ENCODE measurements at regions of chr9 and their contacts with region 1.

Region 1: GRCh38 chr9:113275157-113276131 is at the starts of genes CDC26 and PRPF4:
- DNase-seq: peak; percentile 98
- ATAC-seq: peak; percentile 95
- H3K4me3 Mint-ChIP-seq: no peak within 1 kb of the TSS
- H3K27ac Mint-ChIP-seq: no peak within 1 kb of the TSS
- H3K4me1 Mint-ChIP-seq: peaks cover 21% of the 10 kb centered on the region
- H3K27me3 Mint-ChIP-seq: no peaks in the 10 kb centered on the region
- total RNA-seq, gene CDC26: 26.1 to 28.9 TPM
- total RNA-seq, gene PRPF4: 33.3 to 37.3 TPM

Region 2: DNA sequence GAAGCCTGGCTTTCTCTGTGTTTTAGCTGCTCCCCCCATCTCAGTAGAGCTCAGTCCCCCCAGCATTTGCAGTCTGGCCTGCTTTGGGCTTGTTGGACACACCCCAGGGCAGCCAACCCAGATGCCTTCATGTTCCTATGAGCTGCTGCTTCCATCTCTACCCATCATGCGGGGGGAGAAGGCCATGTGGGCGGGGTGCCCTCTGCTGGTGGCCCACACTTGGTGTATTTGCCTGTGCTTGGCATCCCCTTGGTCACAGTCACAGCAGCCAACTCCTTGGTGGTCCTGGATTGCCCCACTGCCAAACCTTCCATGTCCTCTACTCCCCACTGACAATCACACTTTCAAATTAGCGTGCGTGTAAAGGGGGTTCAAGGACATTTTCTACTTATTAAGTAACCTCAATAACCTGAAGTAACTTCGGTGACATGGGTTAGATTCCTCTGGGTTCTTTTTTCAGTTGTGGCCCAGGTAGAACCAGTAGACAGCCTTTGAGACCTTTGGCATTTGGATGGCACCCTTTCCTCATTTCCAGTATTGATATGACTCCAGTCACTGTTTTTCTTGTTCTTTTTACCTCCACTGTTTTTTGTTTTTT is 482.1 kb before region 1 on chr9:
- CTCF ChIA-PET with region 1: no interaction called
- POLR2A ChIA-PET with region 1: no interaction called
- DNase-seq: peak; percentile 89
- ATAC-seq: peak; percentile 99
- H3K4me3 Mint-ChIP-seq: no peak overlapping the region
- H3K27ac Mint-ChIP-seq: no peak overlapping the region
- H3K4me1 Mint-ChIP-seq: peaks cover 6% of the 10 kb centered on the region
- H3K27me3 Mint-ChIP-seq: no peaks in the 10 kb centered on the region

Region 3: DNA sequence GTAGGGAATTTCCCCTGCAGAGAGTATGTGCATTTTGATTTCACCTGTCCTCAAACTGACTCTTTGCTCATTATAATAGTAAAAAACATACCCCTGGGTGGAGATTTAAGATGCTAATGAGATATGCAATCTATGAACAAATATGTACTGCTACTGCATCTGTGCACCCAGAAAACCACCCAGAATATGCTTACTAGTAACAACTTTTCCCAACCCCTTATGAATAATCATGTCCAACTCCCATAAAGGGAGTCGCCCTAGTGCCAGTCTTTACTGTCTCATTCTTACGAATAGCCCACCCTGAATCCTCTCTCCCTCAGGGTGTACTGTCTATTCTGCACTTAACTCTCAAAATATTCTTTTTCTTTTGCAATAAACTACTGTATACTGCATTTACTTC is 179.9 kb before region 1 on chr9:
- CTCF ChIA-PET with region 1: no interaction called
- POLR2A ChIA-PET with region 1: no interaction called
- DNase-seq: no peak
- ATAC-seq: no peak
- H3K4me3 Mint-ChIP-seq: no peak overlapping the region
- H3K27ac Mint-ChIP-seq: no peak overlapping the region
- H3K4me1 Mint-ChIP-seq: no peaks in the 10 kb centered on the region
- H3K27me3 Mint-ChIP-seq: peaks cover 21% of the 10 kb centered on the region

Region 4: DNA sequence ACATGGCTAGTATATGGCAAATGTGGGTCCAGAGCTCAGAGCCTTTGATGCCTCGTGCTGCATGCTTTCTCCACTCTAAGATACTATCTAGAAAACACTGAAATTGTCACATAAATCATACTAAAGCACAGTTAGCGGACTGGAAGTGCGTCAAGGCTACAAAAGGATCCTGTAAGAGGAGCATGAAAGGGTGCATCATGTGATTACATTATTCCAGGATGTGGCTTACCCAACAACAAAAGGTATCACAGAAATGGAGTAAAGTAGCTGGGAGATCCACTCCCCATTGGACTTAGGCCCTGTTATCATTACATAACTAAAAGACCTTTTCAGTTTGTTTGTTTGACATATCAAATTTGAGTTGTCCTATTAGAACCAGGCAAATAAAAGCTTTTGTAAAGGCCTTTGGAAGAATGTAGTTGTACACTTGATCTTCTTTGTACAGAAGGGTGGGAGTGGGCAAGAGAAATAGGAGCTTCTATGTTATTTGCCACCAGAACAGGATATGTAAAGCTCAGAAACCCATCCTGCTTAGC is 47.2 kb before region 1 on chr9:
- CTCF ChIA-PET with region 1: interaction called, 41 read pairs
- POLR2A ChIA-PET with region 1: interaction called, 4 read pairs
- DNase-seq: no peak
- ATAC-seq: no peak
- H3K4me3 Mint-ChIP-seq: no peak overlapping the region
- H3K27ac Mint-ChIP-seq: no peak overlapping the region
- H3K4me1 Mint-ChIP-seq: peaks cover 22% of the 10 kb centered on the region
- H3K27me3 Mint-ChIP-seq: no peaks in the 10 kb centered on the region

Region 5: GRCh38 chr9:113340017-113340699 is 64.7 kb after region 1 on chr9 and contains the start of gene WDR31:
- CTCF ChIA-PET with region 1: interaction called, 14 read pairs
- POLR2A ChIA-PET with region 1: interaction called, 10 read pairs
- DNase-seq: peak; percentile 82
- ATAC-seq: peak; percentile 99
- H3K4me3 Mint-ChIP-seq: peak within 1 kb of the TSS; percentile 83
- H3K27ac Mint-ChIP-seq: peak within 1 kb of the TSS; percentile 50
- H3K4me1 Mint-ChIP-seq: peaks cover 37% of the 10 kb centered on the region
- H3K27me3 Mint-ChIP-seq: peaks cover 2% of the 10 kb centered on the region
- total RNA-seq, gene WDR31: 0.47 to 0.92 TPM

Region 6: DNA sequence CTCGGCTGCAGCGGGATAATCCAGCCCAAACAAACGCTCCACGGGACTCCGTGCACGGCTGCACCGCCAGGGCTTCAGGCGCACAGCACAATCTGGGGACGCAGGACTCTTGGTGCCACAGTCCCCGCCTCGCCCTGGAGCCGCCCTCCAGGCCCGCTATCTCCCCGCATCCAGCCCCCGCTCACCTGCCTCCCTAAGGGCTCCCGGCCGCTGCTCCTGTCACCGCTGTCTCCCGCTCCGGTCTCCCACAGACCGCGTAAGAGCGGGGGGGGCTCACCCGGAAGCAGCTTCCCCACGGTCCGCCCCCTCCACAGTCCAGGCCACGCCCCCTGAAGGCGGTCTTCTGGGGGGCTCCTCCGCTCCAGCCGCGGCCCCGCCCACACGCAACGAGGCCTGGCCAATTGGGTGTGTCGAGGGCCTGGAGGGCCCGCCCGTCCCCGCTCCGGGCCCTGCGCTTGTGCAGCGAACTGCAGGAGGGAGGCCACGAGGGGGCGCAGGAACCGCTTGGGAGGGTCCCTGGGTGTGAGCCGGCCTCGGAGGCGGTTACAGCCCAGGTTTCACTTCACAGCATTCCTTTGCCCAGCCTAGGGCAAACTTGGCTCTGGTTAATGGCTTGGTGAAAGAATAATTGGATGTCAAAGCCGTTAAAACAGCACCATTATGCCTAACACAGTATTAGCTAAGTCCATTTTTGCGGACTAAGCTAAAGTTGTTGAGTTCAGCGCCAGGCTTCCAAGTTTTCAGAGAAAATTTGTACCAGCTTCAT is 125.8 kb after region 1 on chr9 and contains the start of gene ALAD:
- CTCF ChIA-PET with region 1: interaction called, 105 read pairs
- POLR2A ChIA-PET with region 1: no interaction called
- DNase-seq: peak; percentile 99
- ATAC-seq: peak; percentile 100
- H3K4me3 Mint-ChIP-seq: peak within 1 kb of the TSS; percentile 89
- H3K27ac Mint-ChIP-seq: peak within 1 kb of the TSS; percentile 81
- H3K4me1 Mint-ChIP-seq: peaks cover 17% of the 10 kb centered on the region
- H3K27me3 Mint-ChIP-seq: no peaks in the 10 kb centered on the region
- total RNA-seq, gene ALAD: 26.0 to 30.7 TPM

Region 7: DNA sequence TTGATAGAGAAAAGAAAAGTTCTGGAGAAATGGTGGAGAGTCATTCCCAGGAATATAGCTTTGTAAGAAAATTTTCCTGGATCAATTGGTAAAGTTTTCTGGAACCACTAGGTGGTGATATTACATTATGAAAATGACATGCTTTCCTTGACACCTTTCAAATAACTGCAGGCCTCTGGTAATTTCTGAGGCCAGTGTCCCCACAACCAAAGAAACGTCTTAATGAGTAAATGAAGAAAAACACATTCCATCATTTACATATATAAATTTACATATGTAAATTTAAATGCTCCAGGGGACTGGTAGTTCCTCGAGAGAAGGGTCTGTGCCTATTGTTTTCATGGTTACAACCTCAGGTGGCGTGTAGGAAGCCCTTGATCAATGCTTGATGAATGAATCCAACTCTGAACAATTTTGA is 170.9 kb after region 1 on chr9:
- CTCF ChIA-PET with region 1: interaction called, 12 read pairs
- POLR2A ChIA-PET with region 1: no interaction called
- DNase-seq: peak; percentile 31
- ATAC-seq: no peak
- H3K4me3 Mint-ChIP-seq: no peak overlapping the region
- H3K27ac Mint-ChIP-seq: no peak overlapping the region
- H3K4me1 Mint-ChIP-seq: peaks cover 3% of the 10 kb centered on the region
- H3K27me3 Mint-ChIP-seq: no peaks in the 10 kb centered on the region

Measured in activated CD8-positive, alpha-beta T cell treated with anti-CD3 and anti-CD28 coated beads, Interleukin-2, amount 10 ng/mL, durations not matched to agents 7 days and 5 days (primary cell).